ENCODE measurements at regions of chr2 and their contacts with region 1.

Region 1: GRCh38 chr2:203730076-203730729 is 23.8 kb downstream of the CD28 start:
- DNase-seq: no peak
- H3K4me3 Mint-ChIP-seq: peak overlapping the region; percentile 17
- H3K27ac Mint-ChIP-seq: peak overlapping the region; percentile 97
- H3K4me1 Mint-ChIP-seq: peaks cover 91% of the 10 kb centered on the region
- H3K27me3 Mint-ChIP-seq: no peaks in the 10 kb centered on the region

Region 2: DNA sequence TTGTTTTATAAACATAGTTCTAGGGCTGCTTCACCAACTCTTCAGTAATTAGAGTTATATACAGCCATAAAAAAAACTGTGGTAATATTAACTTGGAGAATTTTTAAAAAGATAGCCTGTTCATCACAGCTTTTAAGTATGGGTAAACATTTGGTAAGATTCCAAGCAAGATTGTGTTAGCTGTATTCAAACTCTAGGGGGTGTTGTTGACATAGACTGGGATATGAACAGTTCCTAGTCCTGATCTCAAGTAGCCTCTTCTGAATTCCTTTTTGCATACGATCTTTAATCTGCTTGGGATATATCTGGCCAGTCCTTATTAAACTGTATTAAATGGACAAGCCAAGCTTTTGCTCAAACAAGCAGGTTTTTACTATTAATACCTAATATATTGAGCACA is 1451.3 kb before region 1 on chr2:
- CTCF ChIA-PET with region 1: no interaction called
- intact Hi-C with region 1: loop called (anchors 5 kb)
- DNase-seq: no peak
- H3K4me3 Mint-ChIP-seq: no peak overlapping the region
- H3K27ac Mint-ChIP-seq: peak overlapping the region; percentile 92
- H3K4me1 Mint-ChIP-seq: peaks cover 51% of the 10 kb centered on the region
- H3K27me3 Mint-ChIP-seq: no peaks in the 10 kb centered on the region

Region 3: DNA sequence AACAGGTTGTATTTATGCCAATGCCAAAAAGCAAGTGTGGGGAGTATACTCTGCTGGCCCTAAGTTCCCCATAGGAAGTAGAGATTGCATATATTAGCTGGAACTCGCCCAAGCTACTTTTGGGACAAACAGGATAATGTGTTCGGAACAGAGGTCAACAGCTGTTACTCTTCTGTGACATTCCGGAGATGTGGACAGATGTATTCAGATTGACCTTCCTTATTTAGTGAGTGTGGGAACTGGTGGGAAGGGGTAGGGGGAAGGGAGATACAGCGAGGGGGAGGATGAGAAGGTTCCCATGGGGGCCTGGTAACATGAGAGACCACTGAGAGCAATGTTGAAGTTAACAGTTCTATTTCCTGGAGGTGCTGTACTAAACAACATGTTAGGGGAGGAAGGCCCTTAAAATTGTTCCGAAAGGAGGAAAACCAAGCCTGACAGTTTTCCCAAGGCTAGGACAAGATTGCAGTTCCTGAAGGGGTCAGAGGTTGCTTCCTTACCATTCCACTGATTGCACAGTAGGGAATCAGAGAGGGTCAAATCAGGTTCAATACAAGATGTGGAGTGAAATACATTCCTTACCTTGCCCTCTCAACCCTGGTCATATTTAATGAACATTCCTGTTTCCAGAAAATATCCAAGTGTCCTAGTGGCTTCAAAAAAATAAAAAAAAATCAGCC is 38.0 kb before region 1 on chr2:
- CTCF ChIA-PET with region 1: no interaction called
- intact Hi-C with region 1: no loop called
- DNase-seq: no peak
- H3K4me3 Mint-ChIP-seq: no peak overlapping the region
- H3K27ac Mint-ChIP-seq: no peak overlapping the region
- H3K4me1 Mint-ChIP-seq: peaks cover 16% of the 10 kb centered on the region
- H3K27me3 Mint-ChIP-seq: no peaks in the 10 kb centered on the region

Region 4: DNA sequence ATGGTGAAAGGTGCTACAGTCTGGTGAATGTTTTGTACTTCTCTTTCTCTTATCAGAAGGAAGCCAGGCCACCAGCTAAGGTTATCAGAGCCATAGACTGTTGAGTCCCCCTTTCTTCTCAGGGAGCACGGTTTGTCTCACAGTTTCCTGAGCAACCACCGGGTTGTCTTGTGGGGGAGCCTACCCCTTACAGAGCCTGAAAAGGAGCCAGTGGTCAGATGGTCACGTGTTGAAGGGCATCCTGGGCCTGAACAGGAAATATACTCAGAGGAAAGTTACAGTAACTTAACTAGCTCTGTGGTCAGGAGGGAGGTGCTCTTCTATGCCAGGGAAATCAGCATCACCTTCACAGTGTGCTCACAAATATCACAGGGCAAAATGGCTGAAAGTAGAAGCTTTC is 12.1 kb before region 1 on chr2:
- CTCF ChIA-PET with region 1: interaction called, 26 read pairs
- intact Hi-C with region 1: loop called (anchors 1 kb)
- DNase-seq: peak; percentile 75
- H3K4me3 Mint-ChIP-seq: peak overlapping the region; percentile 60
- H3K27ac Mint-ChIP-seq: peak overlapping the region; percentile 95
- H3K4me1 Mint-ChIP-seq: peaks cover 97% of the 10 kb centered on the region
- H3K27me3 Mint-ChIP-seq: no peaks in the 10 kb centered on the region

Region 5: GRCh38 chr2:203759690-203760365 is 29.6 kb after region 1 on chr2:
- CTCF ChIA-PET with region 1: interaction called, 3 read pairs
- intact Hi-C with region 1: loop called (anchors 1 kb)
- DNase-seq: no peak
- H3K4me3 Mint-ChIP-seq: no peak overlapping the region
- H3K27ac Mint-ChIP-seq: no peak overlapping the region
- H3K4me1 Mint-ChIP-seq: peaks cover 59% of the 10 kb centered on the region
- H3K27me3 Mint-ChIP-seq: no peaks in the 10 kb centered on the region

Region 6: GRCh38 chr2:203871371-203871983 is 141.3 kb after region 1 on chr2:
- CTCF ChIA-PET with region 1: no interaction called
- intact Hi-C with region 1: loop called (anchors 1 kb)
- DNase-seq: peak; percentile 69
- H3K4me3 Mint-ChIP-seq: peak overlapping the region; percentile 92
- H3K27ac Mint-ChIP-seq: peak overlapping the region; percentile 99
- H3K4me1 Mint-ChIP-seq: peaks cover 55% of the 10 kb centered on the region
- H3K27me3 Mint-ChIP-seq: no peaks in the 10 kb centered on the region

Region 7: DNA sequence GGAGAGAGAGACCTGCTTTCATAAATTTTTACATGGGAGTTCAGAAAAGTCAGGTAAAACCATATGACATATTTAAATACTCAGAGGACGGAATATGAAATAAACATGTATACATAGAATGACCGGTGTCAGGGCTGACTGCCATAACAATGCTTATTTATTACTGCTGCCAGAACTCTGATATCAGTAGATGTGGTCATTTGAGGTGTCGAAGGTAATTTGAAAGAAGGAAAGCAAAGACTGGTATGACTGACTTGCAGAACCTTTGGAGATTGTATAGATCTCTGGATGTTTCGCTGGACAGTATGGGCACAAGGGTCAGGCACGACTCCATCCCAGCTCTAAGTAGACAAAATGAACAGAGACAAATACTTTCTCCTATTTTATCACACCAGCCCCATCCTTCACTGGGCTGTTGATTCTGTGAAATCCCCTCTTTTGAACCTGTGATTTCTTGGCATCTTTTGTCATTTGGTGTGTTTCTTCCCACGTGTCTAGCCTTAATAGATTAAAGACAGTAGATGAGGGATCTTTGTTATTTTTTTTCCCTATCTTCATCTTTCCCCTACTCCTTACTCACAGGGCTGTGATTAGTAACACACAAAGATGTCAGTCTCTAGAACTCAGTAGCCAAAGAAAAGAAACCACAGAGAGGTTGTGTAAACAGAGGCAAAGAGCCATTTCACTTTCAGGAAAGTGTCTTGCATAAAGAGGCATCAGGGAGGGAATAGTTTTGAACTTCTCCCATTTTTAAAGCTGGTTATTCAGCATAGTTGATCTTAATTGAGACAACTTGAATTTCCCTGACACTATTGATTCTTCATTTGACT is 268.0 kb after region 1 on chr2:
- CTCF ChIA-PET with region 1: no interaction called
- intact Hi-C with region 1: loop called (anchors 5 kb)
- DNase-seq: no peak
- H3K4me3 Mint-ChIP-seq: peak overlapping the region; percentile 4
- H3K27ac Mint-ChIP-seq: peak overlapping the region; percentile 77
- H3K4me1 Mint-ChIP-seq: peaks cover 68% of the 10 kb centered on the region
- H3K27me3 Mint-ChIP-seq: no peaks in the 10 kb centered on the region

Measured in activated naive CD4-positive, alpha-beta T cell treated with anti-CD3 and anti-CD28 coated beads for 36 hours (primary cell).